Endothelial cell of umbilical vein (primary cell): ENCODE measurements at regions of chr14 and their contacts with region 1.

Region 1: GRCh38 chr14:68926236-68926635 is 52.9 kb downstream of the ACTN1 start:
- DNase-seq: no peak
- H3K4me3 ChIP-seq: no peak overlapping the region
- H3K27ac ChIP-seq: no peak overlapping the region
- H3K4me1 ChIP-seq: no peaks in the 10 kb centered on the region
- H3K27me3 ChIP-seq: no peaks in the 10 kb centered on the region
- CTCF ChIP-seq: peak; percentile 27 to 46
- POLR2A ChIP-seq: no peak

Region 2: DNA sequence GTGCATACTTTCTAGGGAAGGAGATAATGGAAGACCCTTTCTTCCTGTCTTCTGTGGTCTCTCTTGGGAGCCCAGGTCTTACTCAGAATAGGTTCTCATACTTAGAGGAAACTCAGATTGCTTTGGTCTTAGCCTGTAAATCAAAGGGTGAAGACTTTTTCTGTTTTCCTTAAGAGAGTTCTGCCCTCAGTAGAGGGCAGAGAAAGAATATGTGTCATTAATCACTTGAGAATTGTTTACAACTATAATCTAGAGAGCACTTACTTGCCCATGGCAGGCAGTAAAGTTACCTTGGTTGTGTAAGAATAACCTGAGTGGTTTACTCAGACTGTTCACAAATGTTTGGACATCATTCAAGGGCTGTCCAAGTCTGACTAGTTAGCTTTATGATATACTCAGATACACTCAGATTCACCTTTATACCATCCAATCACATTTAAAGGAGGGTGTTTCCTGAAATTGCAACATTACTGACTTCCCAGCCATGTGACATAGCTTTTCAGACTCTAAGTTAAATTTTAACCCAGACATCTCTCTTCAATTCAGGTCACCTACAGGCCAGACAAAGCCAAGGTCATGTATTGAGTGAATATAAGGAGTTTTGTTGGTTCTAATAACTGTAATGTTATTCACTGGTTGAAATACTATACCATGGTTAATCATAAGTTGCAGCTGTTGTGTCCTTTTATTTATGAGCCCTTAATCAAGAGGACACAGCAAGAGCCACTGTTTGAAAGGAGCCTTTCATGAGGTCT is 734.5 kb before region 1 on chr14:
- CTCF ChIA-PET with region 1: no interaction called
- POLR2A ChIA-PET with region 1: no interaction called
- dilution Hi-C with region 1: no loop called
- intact Hi-C with region 1: no loop called
- DNase-seq: no peak
- H3K4me3 ChIP-seq: no peak overlapping the region
- H3K27ac ChIP-seq: no peak overlapping the region
- H3K4me1 ChIP-seq: no peaks in the 10 kb centered on the region
- H3K27me3 ChIP-seq: no peaks in the 10 kb centered on the region
- CTCF ChIP-seq: no peak
- POLR2A ChIP-seq: no peak

Region 3: DNA sequence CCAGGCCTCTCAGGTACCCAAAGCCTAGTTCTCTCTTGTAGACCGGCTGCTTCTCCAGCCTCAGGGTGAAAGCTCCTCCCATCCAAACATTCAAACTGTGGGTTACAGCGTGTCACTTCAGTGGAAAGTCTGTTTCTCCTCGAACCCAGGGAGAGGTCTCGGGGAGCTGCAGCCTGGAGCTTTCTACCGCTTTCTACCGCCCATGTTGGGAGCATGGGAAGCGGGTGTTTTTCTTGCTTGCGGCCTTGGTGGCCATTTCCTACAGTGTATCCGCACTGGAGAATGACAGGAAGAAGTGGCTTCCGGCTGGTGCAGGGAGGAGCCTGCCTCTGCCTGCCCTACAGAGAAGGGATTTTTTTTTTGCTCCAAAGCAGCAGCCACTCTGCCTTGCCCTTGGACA is 154.6 kb before region 1 on chr14:
- CTCF ChIA-PET with region 1: no interaction called
- POLR2A ChIA-PET with region 1: no interaction called
- dilution Hi-C with region 1: no loop called
- intact Hi-C with region 1: no loop called
- DNase-seq: peak; percentile 90
- H3K4me3 ChIP-seq: no peak overlapping the region
- H3K27ac ChIP-seq: peak overlapping the region; percentile 59
- H3K4me1 ChIP-seq: peaks cover 21% of the 10 kb centered on the region
- H3K27me3 ChIP-seq: no peaks in the 10 kb centered on the region
- CTCF ChIP-seq: no peak
- POLR2A ChIP-seq: peak; percentile 27

Region 4: DNA sequence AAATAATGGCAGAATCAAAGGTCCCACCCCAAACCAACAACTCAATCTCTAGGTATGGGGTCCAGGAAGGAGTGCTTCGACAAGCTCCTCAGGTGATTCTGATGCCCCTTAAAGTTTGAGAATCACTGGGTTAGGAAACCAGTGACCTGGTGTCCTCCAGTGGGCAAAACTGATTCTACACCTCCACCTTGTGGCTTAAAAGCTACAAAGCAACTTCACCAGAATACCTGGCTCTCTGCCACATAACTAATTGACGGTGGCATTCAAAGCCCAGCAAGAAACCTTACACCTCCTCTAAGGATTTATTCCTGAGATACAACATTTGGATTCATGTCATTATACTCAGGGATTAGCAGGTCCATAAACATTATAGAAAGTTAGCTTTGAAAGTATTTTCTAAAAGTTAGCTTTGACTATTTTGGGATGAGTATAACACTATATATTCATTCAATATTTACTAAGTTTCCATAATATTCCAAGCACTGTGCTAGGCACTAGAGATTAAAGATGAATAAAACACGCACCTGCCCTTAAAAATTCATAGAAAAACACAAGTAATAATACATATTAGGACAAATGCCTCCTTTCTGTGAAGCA is 181.3 kb after region 1 on chr14:
- CTCF ChIA-PET with region 1: interaction called, 16 read pairs
- POLR2A ChIA-PET with region 1: no interaction called
- dilution Hi-C with region 1: no loop called
- intact Hi-C with region 1: no loop called
- DNase-seq: peak; percentile 76
- H3K4me3 ChIP-seq: no peak overlapping the region
- H3K27ac ChIP-seq: no peak overlapping the region
- H3K4me1 ChIP-seq: peaks cover 2% of the 10 kb centered on the region
- H3K27me3 ChIP-seq: no peaks in the 10 kb centered on the region
- CTCF ChIP-seq: peak; percentile 58 to 73
- POLR2A ChIP-seq: no peak